CD8-positive, alpha-beta memory T cell (primary cell): ENCODE measurements at regions of chr15 and their contacts with region 1.

Region 1: GRCh38 chr15:85477730-85478129 is 97.3 kb downstream of the AKAP13 start:
- DNase-seq: no peak
- H3K4me3 ChIP-seq: no peak overlapping the region
- H3K4me3 Mint-ChIP-seq: peak overlapping the region in 1 of 7 donors; percentile 4
- H3K27ac ChIP-seq: no peak overlapping the region
- H3K27ac Mint-ChIP-seq: peak overlapping the region in 5 of 8 donors; percentile 17 to 48 (median 24)
- H3K4me1 ChIP-seq: peaks cover 35% of the 10 kb centered on the region
- H3K4me1 Mint-ChIP-seq: peaks cover 75 to 95% (median 93%) of the 10 kb centered on the region in 3 donors
- H3K27me3 ChIP-seq: no peaks in the 10 kb centered on the region
- H3K27me3 Mint-ChIP-seq: no peaks in the 10 kb centered on the region

Region 2: DNA sequence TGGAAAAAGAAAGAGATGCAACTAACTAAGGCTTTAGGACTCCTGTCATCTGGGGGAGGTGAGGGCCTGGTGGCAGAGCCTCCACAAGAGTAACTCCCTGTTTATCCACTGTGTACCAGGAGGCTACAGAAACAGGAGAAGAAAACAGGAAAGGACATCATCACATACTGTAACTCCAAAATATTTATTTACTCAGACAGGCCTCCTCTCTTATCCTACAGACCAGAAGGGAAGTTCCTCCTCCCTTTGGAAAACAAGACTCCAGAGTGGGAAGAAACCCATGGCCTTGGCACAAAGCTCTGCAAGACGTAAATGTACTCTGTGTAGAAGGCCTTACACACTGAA is 137.4 kb before region 1 on chr15:
- CTCF ChIA-PET with region 1: no interaction called
- POLR2A ChIA-PET with region 1: interaction called, 15 read pairs
- DNase-seq: no peak
- H3K4me3 ChIP-seq: no peak overlapping the region
- H3K4me3 Mint-ChIP-seq: no peak overlapping the region
- H3K27ac ChIP-seq: no peak overlapping the region
- H3K27ac Mint-ChIP-seq: peak overlapping the region in 1 of 8 donors; percentile 27
- H3K4me1 ChIP-seq: no peaks in the 10 kb centered on the region
- H3K4me1 Mint-ChIP-seq: no peaks in the 10 kb centered on the region
- H3K27me3 ChIP-seq: no peaks in the 10 kb centered on the region
- H3K27me3 Mint-ChIP-seq: no peaks in the 10 kb centered on the region

Region 3: GRCh38 chr15:85570336-85570735 is 92.6 kb after region 1 on chr15:
- CTCF ChIA-PET with region 1: no interaction called
- POLR2A ChIA-PET with region 1: no interaction called
- DNase-seq: no peak
- H3K4me3 ChIP-seq: no peak overlapping the region
- H3K4me3 Mint-ChIP-seq: peak overlapping the region in 1 of 7 donors; percentile 45
- H3K27ac ChIP-seq: no peak overlapping the region
- H3K27ac Mint-ChIP-seq: peak overlapping the region in 3 of 8 donors; percentile 25 to 87 (median 68)
- H3K4me1 ChIP-seq: no peaks in the 10 kb centered on the region
- H3K4me1 Mint-ChIP-seq: peaks cover 28 to 47% (median 46%) of the 10 kb centered on the region in 3 donors
- H3K27me3 ChIP-seq: no peaks in the 10 kb centered on the region
- H3K27me3 Mint-ChIP-seq: no peaks in the 10 kb centered on the region